Colonic mucosa (tissue), 4 donors: ENCODE measurements at regions of chr1 and their contacts with region 1.

Region 1: DNA sequence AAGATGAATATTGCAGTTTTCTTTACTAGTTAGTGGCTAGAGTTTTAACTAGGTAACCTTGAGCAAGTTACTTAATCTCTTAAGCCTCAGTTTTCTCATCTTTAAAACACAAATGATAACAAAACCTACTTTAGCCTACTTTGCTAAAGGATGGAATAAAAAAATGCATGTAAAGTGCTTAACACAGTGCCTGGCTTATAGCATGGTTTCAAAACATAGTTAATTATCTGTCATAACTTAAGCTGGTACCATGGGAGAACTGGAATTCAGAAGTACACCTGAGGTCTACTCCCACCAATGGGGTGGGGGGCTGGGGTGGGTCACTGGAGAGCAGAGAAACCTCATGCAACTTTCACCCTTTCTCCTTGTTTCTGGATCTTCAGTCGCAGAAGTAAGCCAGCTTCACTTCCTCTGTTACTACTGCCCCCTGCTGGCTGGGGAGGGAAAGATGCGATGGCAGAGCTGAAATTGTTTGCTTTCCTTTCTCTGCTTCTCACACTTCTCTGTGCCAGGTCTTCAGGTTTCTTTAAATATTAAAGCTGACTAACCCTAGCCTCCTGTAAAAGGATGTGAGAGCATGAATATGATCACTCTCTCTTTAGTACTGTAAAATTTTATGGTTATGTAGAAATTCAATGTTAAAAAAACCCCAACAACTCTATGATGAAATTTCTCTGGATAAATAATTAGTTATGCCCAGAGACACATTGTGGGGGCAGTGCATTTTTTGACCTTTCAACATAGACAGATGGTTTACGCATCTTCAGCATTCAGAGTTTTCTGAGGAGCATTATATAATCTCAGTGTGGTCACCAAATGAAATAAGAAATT is 324.2 kb downstream of the HLX start:
- DNase-seq: peak; percentile 81
- H3K4me3 ChIP-seq: no peak overlapping the region
- H3K27ac ChIP-seq: no peak overlapping the region
- H3K4me1 ChIP-seq: no peaks in the 10 kb centered on the region
- H3K27me3 ChIP-seq: no peaks in the 10 kb centered on the region
- CTCF ChIP-seq: peak; percentile 89

Region 2: DNA sequence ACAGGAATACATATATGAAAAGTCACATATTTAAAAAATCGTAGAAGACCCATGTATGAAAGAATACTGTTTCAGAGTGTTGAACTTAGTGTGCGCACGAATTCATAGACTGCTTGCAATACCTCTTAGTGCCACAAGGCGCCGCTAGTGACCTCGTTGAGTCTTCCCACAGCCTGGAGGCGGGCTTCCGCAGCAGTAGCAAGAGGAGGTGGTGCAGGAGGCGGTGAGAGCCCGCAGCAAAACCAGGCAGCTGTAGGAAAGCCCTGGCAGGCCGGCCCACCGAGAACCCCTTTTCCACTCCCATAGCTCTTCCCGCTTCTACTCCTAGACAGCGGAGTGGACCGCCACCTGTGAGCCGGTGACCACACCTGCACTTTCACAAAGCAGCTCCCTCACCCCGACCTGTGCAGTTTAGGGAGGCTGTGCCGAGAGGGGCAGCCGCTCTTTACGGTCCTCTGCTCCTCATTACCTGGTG is 393.2 kb before region 1 on chr1:
- intact Hi-C with region 1: loop called (anchors 10 kb)
- DNase-seq: peak; percentile 71
- H3K4me3 ChIP-seq: no peak overlapping the region
- H3K27ac ChIP-seq: no peak overlapping the region
- H3K4me1 ChIP-seq: no peaks in the 10 kb centered on the region
- H3K27me3 ChIP-seq: no peaks in the 10 kb centered on the region
- CTCF ChIP-seq: peak; percentile 83

Region 3: GRCh38 chr1:220873868-220874655 is 329.4 kb before region 1 on chr1:
- intact Hi-C with region 1: loop called (anchors 5 kb)
- DNase-seq: peak; percentile 67
- H3K4me3 ChIP-seq: no peak overlapping the region
- H3K27ac ChIP-seq: no peak overlapping the region
- H3K4me1 ChIP-seq: no peaks in the 10 kb centered on the region
- H3K27me3 ChIP-seq: peaks cover 15% of the 10 kb centered on the region
- CTCF ChIP-seq: peak; percentile 51

Region 4: GRCh38 chr1:221672239-221672645 is 468.8 kb after region 1 on chr1:
- intact Hi-C with region 1: no loop called
- DNase-seq: no peak
- H3K4me3 ChIP-seq: no peak overlapping the region
- H3K27ac ChIP-seq: no peak overlapping the region
- H3K4me1 ChIP-seq: no peaks in the 10 kb centered on the region
- H3K27me3 ChIP-seq: no peaks in the 10 kb centered on the region
- CTCF ChIP-seq: no peak